ENCODE measurements at regions of chr19 and their contacts with region 1.

Region 1: DNA sequence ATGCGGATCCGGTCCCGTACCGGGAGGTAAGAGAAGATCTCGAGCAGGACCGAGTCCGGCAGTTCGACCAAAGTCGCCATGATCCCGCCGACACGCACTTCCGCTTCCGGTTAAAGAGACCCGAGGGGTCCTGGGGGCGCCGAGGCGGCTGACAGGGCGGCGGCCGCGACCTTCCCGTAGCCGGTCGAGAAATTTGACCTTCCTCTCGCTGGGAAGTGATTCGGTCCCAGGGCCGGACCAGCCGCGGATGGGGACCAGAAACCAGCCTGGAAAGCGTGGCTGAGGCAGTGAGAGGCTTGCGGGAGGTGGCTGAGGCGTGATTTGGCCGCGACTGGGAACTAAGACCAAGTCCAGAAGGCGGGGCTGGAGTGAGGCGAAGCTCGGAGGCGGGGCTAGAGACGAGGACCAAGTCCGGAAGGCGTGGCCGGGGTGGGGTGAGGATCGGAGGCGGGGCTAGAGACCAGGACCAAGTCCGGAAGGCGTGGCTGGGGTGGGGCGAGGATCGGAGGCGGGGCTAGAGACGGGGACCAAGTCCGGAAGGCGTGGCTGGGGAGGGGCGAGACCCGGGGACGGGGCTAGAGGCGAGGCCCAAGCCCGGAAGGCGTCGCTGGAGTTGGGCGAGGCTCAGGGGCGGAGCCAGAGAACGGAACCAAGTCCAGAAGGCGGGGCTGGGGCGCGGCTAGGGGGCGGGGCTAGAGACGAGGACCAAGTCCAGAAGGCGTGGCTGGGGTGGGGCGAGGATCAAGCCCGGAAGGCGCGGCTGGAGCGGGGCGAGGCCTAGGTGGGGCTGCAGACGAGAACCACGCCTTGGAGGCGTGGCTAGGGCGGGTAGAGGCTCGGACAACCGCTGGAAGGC is at the start of gene FBXL12:
- DNase-seq: peak; percentile 100
- ATAC-seq: peak; percentile 92
- H3K4me3 Mint-ChIP-seq: peak within 1 kb of the TSS; percentile 88
- H3K27ac Mint-ChIP-seq: peak within 1 kb of the TSS; percentile 90
- H3K4me1 Mint-ChIP-seq: peaks cover 26% of the 10 kb centered on the region
- H3K27me3 Mint-ChIP-seq: no peaks in the 10 kb centered on the region
- total RNA-seq, gene FBXL12: 19.9 to 22.5 TPM

Region 2: GRCh38 chr19:8592231-8593009 is 1226.5 kb before region 1 on chr19:
- CTCF ChIA-PET with region 1: no interaction called
- POLR2A ChIA-PET with region 1: no interaction called
- intact Hi-C with region 1: loop called in 1 of 2 experiments (anchors 1 kb)
- DNase-seq: peak; percentile 99
- ATAC-seq: peak; percentile 94
- H3K4me3 Mint-ChIP-seq: peak overlapping the region; percentile 70
- H3K27ac Mint-ChIP-seq: no peak overlapping the region
- H3K4me1 Mint-ChIP-seq: peaks cover 15% of the 10 kb centered on the region
- H3K27me3 Mint-ChIP-seq: no peaks in the 10 kb centered on the region

Region 3: GRCh38 chr19:9309139-9309973 is 509.6 kb before region 1 on chr19 and contains the start of gene ZNF699:
- CTCF ChIA-PET with region 1: no interaction called
- POLR2A ChIA-PET with region 1: no interaction called
- intact Hi-C with region 1: loop called in 1 of 2 experiments (anchors 1 kb)
- DNase-seq: peak; percentile 100
- ATAC-seq: peak; percentile 90
- H3K4me3 Mint-ChIP-seq: peak within 1 kb of the TSS; percentile 97
- H3K27ac Mint-ChIP-seq: peak within 1 kb of the TSS; percentile 97
- H3K4me1 Mint-ChIP-seq: peaks cover 13% of the 10 kb centered on the region
- H3K27me3 Mint-ChIP-seq: no peaks in the 10 kb centered on the region
- total RNA-seq, gene ZNF699: 6.7 to 7.1 TPM

Region 4: GRCh38 chr19:9674663-9675357 is 144.2 kb before region 1 on chr19 and contains the start of gene ZNF562:
- CTCF ChIA-PET with region 1: no interaction called
- POLR2A ChIA-PET with region 1: no interaction called
- intact Hi-C with region 1: loop called in 1 of 2 experiments (anchors 1 kb)
- DNase-seq: peak; percentile 91
- ATAC-seq: peak; percentile 78
- H3K4me3 Mint-ChIP-seq: peak within 1 kb of the TSS; percentile 94
- H3K27ac Mint-ChIP-seq: peak within 1 kb of the TSS; percentile 97
- H3K4me1 Mint-ChIP-seq: peaks cover 30% of the 10 kb centered on the region
- H3K27me3 Mint-ChIP-seq: no peaks in the 10 kb centered on the region
- total RNA-seq, gene ZNF562: 29.9 to 39.7 TPM

Region 5: GRCh38 chr19:9834726-9835506 is 16.0 kb after region 1 on chr19 and contains the start of gene PIN1:
- CTCF ChIA-PET with region 1: no interaction called
- POLR2A ChIA-PET with region 1: no interaction called
- intact Hi-C with region 1: loop called (anchors 1 kb)
- DNase-seq: peak; percentile 100
- ATAC-seq: peak; percentile 99
- H3K4me3 Mint-ChIP-seq: peak within 1 kb of the TSS; percentile 86
- H3K27ac Mint-ChIP-seq: peak within 1 kb of the TSS; percentile 88
- H3K4me1 Mint-ChIP-seq: peaks cover 20% of the 10 kb centered on the region
- H3K27me3 Mint-ChIP-seq: no peaks in the 10 kb centered on the region
- total RNA-seq, gene PIN1: 70.4 to 74.2 TPM